Transverse colon (tissue), 4 donors: ENCODE measurements at regions of chr19 and their contacts with region 1.

Region 1: GRCh38 chr19:16283210-16284061 is 41.2 kb upstream of the KLF2 start:
- DNase-seq: peak; percentile 60
- H3K4me3 ChIP-seq: peak overlapping the region in 2 of 4 donors; percentile 11 to 24
- H3K27ac ChIP-seq: peak overlapping the region; percentile 79 to 89 (median 88)
- H3K4me1 ChIP-seq: peaks cover 0 to 42% (median 17%) of the 10 kb centered on the region in 4 donors
- H3K27me3 ChIP-seq: peaks cover 22% of the 10 kb centered on the region
- CTCF ChIP-seq: no peak
- EP300 ChIP-seq: peak; percentile 69
- POLR2A ChIP-seq: peak; percentile 70

Region 2: GRCh38 chr19:16076154-16076957 is 207.1 kb before region 1 on chr19 and contains the start of gene TPM4:
- in situ Hi-C with region 1: no loop called
- intact Hi-C with region 1: loop called (anchors 5 kb)
- DNase-seq: peak; percentile 94
- H3K4me3 ChIP-seq: peak within 1 kb of the TSS; percentile 82 to 100 (median 93)
- H3K27ac ChIP-seq: peak within 1 kb of the TSS; percentile 99 to 100 (median 100)
- H3K4me1 ChIP-seq: peaks cover 24 to 69% (median 49%) of the 10 kb centered on the region in 4 donors
- H3K27me3 ChIP-seq: no peaks in the 10 kb centered on the region
- CTCF ChIP-seq: no peak
- EP300 ChIP-seq: peak; percentile 87
- POLR2A ChIP-seq: peak; percentile 72
- total RNA-seq, gene TPM4: 228 to 491 (median 288) TPM

Region 3: DNA sequence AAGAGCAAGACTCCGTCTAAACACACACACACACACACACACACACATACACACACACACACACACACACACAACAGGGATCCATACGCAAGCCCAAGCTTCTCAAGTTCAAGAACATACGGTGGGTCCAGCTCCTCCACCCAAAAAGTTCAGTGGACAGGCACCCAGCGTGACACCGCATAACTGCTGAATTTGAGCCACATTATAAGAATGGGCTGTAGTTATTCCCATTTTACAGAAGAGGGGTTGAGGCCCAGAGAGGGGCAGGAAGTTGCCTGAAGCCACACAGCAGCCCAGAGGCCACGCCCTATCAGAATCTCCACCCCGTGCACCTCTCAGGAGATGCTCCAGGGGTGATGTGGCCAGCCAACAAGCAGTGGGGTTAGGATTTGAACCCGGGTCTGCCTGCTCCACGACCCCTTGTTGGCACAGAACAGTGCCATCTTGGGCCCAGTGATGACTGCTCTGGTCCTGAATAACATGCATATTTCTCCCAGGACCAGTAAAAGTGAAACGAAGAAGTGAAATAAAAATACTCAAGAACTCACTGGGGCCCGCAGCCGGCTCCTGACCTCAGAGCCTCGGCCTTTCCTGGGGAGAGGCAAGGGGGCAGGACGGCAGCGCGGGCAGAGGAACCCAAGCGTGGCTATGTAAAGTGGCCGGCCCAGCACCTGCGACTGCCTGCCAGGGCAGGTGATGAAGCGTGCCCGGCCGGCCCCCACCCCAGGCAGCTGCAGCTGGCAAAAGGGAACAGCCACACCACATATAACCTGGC is 23.9 kb before region 1 on chr19:
- in situ Hi-C with region 1: no loop called
- intact Hi-C with region 1: no loop called
- DNase-seq: peak; percentile 68
- H3K4me3 ChIP-seq: no peak overlapping the region
- H3K27ac ChIP-seq: peak overlapping the region; percentile 42 to 73 (median 68)
- H3K4me1 ChIP-seq: peaks cover 0 to 29% (median 6%) of the 10 kb centered on the region in 4 donors
- H3K27me3 ChIP-seq: peaks cover 3% of the 10 kb centered on the region
- CTCF ChIP-seq: no peak
- EP300 ChIP-seq: no peak
- POLR2A ChIP-seq: no peak

Region 4: GRCh38 chr19:16315825-16316505 is 32.5 kb after region 1 on chr19:
- in situ Hi-C with region 1: no loop called
- intact Hi-C with region 1: no loop called
- DNase-seq: peak; percentile 45
- H3K4me3 ChIP-seq: no peak overlapping the region
- H3K27ac ChIP-seq: peak overlapping the region; percentile 66 to 82 (median 74)
- H3K4me1 ChIP-seq: peaks cover 0 to 17% (median 0%) of the 10 kb centered on the region in 4 donors
- H3K27me3 ChIP-seq: no peaks in the 10 kb centered on the region
- CTCF ChIP-seq: no peak
- EP300 ChIP-seq: no peak
- POLR2A ChIP-seq: no peak